ENCODE measurements at regions of chr17 and their contacts with region 1.

Region 1: DNA sequence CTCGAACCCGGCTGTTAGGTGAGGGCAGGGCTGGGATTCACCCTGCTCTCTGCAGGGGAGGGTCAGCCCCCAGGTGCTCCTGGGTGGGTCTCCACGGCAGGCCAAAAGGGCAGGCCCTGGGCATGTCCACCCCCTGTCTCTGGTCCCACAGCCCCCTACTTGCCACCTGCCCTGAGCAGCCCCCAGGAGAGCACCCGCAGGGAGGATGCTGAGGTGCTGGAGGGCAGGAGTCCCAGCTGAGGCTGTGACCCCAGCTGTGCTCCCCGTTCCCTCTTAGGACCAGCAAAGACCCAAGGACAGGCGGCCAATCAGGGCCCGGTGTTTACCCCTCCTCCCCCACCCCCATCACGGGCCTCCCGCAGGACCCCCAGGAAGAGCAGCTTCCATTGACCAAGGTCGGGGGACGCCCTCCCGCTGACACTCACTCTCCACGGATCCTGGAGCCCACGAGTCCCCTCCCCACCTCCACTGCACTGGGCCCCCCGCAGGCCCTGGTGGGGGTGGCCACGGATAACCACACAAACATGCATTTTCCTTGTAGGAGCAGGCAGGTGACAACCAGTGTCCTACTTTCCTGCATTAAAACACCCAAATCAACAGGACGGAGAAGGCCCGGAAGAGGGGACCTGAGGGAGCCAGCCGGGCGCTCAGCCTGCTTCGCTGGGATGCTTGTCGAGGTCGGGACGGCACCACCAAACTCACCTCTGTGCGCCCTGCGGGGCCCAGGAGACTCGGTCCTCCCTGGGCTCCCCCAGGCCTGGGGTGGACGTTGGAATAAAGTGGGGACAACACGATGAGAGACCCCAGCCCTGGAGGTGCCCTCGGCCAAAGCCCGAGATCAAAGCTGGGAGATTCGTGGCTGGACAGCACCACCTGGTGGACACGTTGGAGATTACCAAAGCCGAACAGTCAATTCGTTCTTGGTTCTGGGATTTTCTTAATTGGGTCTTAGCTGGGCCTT is 22.5 kb upstream of the ENPP7 start:
- ATAC-seq: peak; percentile 32 to 80 (median 48)
- H3K4me3 ChIP-seq: no peak overlapping the region
- H3K27ac ChIP-seq: no peak overlapping the region
- H3K4me1 ChIP-seq: peaks cover 18 to 20% of the 10 kb centered on the region in 2 donors

Region 2: GRCh38 chr17:79074650-79075445 is 633.4 kb before region 1 on chr17 and contains the start of gene ENGASE:
- in situ Hi-C with region 1: loop called in 3 of 9 experiments (anchors 25 kb)
- ATAC-seq: peak; percentile 95 to 98 (median 98)
- H3K4me3 ChIP-seq: peak within 1 kb of the TSS; percentile 52 to 86 (median 80)
- H3K27ac ChIP-seq: peak within 1 kb of the TSS; percentile 29 to 83
- H3K4me1 ChIP-seq: peaks cover 8 to 10% of the 10 kb centered on the region in 2 donors
- total RNA-seq, gene ENGASE: 10.0 to 49.6 (median 15.4) TPM

Region 3: DNA sequence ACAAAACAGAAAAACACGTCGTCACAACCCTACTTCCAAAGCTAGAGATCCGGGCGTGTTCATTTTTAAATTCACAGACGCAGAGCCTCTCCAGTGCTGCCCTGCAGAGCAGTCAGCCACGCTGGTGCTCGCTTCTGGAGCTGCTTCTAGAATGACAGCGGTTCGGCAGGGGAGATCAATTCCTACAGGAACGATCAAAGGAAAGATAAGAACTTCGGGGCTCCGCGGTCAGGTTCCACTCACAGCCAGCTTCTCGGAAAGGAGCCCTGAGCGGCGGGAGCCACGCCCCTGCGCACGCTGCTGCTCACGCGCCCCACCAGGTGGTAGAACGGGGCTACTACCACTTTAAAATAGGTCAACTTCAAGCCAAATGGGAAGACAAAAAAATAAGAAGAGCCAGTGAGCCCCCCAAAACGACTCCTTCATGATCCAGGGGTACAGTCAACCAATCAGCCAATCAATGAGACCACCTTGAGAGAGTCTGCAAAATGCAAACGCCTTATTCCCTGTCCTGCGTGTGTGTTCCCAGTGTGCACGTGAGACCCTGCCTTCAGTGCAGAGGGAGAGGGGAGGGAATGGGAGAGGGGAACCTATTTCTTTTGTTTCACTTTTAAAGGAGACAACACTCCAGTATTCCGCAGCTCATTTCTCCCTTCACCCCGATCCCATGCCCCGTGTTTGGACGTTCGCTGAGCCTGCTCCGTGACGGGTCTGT is 307.1 kb before region 1 on chr17:
- in situ Hi-C with region 1: loop called in 2 of 9 experiments (anchors 25 kb)
- ATAC-seq: peak; percentile 77 to 90 (median 84)
- H3K4me3 ChIP-seq: peak overlapping the region in 4 of 5 donors; percentile 7 to 30 (median 12)
- H3K27ac ChIP-seq: no peak overlapping the region
- H3K4me1 ChIP-seq: no peaks in the 10 kb centered on the region

Region 4: GRCh38 chr17:79760197-79760906 is 52.1 kb after region 1 on chr17:
- in situ Hi-C with region 1: no loop called
- ATAC-seq: peak in 1 of 8 experiments; percentile 9
- H3K4me3 ChIP-seq: no peak overlapping the region
- H3K27ac ChIP-seq: no peak overlapping the region
- H3K4me1 ChIP-seq: no peaks in the 10 kb centered on the region

Region 5: DNA sequence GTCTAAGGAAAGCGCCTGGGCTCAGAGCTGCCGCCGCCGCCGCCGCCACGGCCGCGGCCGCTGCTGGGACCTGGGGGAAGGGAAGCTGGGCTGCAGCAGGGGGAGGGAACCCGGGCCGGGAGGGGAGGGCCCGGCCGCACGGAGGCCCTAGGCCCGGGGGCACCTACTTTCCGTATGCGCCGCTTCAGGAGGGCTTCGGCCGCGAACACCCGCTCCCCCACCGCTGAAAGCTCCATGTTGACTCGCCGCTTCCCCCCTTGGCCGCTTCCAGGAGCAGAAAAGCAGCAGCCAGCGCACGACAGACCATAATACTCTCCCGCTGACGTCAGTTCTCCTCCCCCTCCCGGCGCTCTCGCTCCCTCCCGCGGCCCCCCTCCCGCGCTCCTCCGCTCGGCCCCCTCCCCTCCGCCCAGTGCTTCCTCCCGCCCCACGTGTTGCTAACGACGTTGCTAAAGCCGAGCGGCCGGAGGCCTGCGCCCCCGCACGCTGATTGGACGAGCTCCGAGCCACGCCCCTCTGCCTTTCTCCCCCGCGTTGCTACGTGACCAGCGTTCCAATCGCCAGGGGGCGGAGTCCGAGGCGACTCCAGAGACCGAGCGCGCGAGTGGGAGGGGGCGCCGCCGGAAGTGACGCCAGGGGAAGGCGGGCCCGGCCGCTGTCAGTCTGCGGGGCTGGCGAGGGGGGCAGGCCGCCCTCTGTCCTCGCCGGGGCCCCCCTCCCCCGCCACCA is 88.7 kb after region 1 on chr17 and contains the start of gene CBX8:
- in situ Hi-C with region 1: no loop called
- ATAC-seq: peak; percentile 77 to 86 (median 81)
- H3K4me3 ChIP-seq: peak within 1 kb of the TSS; percentile 52 to 76 (median 68)
- H3K27ac ChIP-seq: peak within 1 kb of the TSS; percentile 90 to 93
- H3K4me1 ChIP-seq: peaks cover 43 to 64% of the 10 kb centered on the region in 2 donors
- total RNA-seq, gene CBX8: 4.4 to 16.4 (median 11.9) TPM